ENCODE measurements at regions of chr13 and their contacts with region 1.

Region 1: DNA sequence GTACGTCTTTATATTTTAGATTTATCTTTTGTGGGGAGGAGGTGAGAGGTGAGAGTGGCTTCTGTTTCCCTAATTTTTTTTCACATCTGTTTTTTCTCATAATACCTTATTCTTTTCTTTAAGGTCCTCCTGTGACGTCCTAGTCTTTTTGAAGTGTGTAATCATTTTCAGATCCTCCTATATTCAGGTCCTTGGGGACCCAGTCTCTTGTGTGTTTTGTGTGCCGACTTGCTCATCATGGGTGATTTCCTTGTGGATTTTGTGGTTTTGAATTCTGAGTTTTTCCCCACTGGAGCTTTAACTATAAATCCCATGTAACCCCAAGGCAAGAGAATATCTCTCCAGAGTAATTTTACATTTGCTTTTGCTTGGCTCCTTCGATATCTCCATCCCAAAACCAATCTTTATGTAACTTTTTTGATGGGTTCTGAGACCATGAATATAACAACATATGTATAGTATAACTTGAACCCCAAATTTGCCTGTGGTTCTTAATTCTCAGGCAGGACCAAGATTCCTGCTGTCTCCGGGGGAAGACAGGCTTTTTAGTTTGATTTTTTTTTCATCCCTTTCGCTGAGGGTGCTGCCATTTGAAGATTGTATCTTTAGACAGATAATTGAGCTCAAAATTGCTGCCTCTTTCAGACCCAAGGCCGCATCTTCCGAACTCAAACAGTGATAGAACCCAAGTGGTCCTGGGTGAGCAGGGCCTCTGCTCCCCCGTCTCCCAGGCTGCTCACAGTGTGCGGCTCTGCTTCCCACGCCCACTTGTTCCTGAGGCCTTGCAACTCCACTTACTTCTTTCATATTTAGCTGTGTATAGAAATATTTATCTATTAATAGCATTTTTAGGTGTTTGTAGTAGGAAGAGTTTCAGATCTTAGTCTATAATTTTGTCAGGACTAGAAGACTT is 59.1 kb upstream of the GPR183 start:
- DNase-seq: no peak
- ATAC-seq: no peak
- H3K4me3 ChIP-seq: no peak overlapping the region
- H3K27ac ChIP-seq: peak overlapping the region in 1 of 10 donors; percentile 64
- H3K4me1 ChIP-seq: peaks cover 0 to 46% (median 0%) of the 10 kb centered on the region in 9 donors
- H3K27me3 ChIP-seq: no peaks in the 10 kb centered on the region
- CTCF ChIP-seq: no peak

Region 2: DNA sequence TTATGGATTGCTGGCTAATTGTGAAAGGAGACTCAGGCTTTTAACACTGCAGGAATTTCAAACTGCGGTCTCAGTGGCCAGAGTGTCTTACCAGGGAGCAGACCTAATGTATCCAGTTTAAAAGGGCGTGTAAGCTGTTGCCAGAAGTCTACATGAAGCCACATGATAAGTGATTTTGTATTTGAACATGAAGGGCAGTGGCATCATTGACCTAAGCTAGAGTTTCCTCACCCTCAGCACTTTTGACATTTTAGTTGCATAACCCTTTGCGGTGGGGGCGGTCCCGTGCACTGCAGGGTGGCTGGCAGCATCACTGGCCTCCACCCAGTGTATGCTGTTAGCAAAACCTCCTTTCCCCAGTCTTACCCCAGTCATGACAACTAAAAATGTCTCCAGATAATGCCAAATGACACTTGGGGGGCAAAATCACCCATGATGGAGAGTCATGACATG is 84.5 kb before region 1 on chr13:
- intact Hi-C with region 1: loop called in 1 of 10 experiments (anchors 5 kb)
- DNase-seq: peak; percentile 35 to 50
- ATAC-seq: peak; percentile 46 to 83 (median 69)
- H3K4me3 ChIP-seq: no peak overlapping the region
- H3K27ac ChIP-seq: peak overlapping the region in 8 of 10 donors; percentile 15 to 88 (median 46)
- H3K4me1 ChIP-seq: peaks cover 0 to 98% (median 43%) of the 10 kb centered on the region in 9 donors
- H3K27me3 ChIP-seq: no peaks in the 10 kb centered on the region
- CTCF ChIP-seq: no peak

Region 3: GRCh38 chr13:99878921-99879610 is 512.7 kb after region 1 on chr13:
- intact Hi-C with region 1: no loop called
- DNase-seq: no peak
- ATAC-seq: no peak
- H3K4me3 ChIP-seq: no peak overlapping the region
- H3K27ac ChIP-seq: no peak overlapping the region
- H3K4me1 ChIP-seq: no peaks in the 10 kb centered on the region
- H3K27me3 ChIP-seq: no peaks in the 10 kb centered on the region
- CTCF ChIP-seq: no peak

Measured in heart right ventricle (tissue), 16 donors.